Transverse colon (tissue), 4 donors: ENCODE measurements at regions of chr1 and their contacts with region 1.

Region 1: DNA sequence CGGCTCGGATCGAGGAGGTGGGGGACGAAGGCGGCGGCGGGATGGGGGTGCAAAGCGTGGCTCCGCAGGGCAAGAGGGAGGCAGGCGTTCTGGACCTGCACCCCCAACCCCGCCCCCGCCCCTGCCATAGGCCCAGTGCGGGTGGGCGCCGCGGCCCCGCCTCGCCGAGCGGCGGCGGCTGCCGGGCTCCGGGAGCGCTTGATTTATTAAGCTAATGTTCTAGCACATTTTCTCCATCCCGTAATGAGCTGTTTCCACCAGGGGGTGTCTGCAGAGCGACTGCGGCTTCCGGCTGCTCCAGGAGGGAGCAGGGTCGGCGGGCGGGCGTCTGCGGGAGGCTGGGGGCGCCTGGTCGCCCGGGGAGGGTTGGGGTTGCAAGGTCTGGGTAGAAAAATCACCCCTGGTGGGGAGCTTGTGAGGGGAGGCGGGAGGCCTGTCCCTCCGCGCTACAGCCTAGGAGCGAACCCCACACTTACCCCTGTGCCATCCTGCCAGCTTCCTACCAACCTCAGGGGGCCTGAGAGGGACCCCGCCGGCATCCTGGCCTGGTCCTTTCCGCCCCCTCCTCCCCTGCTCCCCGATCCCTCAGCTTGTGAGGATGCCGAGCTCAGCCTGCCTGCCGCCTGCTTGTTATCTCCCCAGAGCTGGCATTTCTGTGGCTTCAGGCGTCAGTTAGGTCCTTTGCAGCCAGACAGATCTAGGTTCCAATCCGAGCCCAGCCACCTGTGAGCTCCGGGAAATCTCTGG is 48.5 kb upstream of the ACOT11 start:
- DNase-seq: peak; percentile 43
- H3K4me3 ChIP-seq: peak overlapping the region; percentile 11 to 47 (median 36)
- H3K27ac ChIP-seq: peak overlapping the region in 1 of 4 donors; percentile 29
- H3K4me1 ChIP-seq: peaks cover 6 to 16% (median 12%) of the 10 kb centered on the region in 4 donors
- H3K27me3 ChIP-seq: peaks cover 5% of the 10 kb centered on the region
- CTCF ChIP-seq: peak; percentile 37 to 53 (median 52)
- EP300 ChIP-seq: no peak
- POLR2A ChIP-seq: no peak

Region 2: DNA sequence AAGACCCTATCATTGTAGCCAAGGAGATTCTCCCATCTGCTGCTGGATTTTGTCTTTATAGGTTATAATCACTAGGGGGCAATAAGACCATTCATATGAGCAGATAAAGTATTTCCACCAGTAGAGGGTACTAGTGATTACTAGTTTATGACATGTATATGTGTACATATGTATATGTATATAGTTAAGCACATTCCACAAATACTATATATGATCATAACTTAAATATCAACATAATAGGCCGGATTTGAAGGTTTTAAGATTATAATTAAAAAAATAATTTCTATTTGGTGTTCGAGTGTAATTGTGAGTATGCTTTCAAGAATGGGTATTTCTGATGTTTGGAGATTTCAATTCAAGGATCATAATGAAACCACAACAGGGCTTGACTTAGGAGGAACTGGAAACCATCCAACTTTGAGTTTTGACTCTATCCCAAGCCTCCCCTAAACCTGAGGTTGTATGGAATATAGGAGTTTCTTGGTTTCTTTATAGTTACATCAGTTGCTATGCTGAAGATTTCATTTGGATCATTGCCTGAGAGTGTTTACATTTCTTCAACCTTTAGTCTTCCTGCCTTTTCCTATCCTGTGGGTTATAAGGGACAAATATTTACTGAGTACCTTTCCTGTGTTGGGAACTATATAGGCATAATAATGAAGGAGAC is 429.2 kb before region 1 on chr1:
- in situ Hi-C with region 1: loop called in 2 of 4 experiments (anchors 10 kb)
- intact Hi-C with region 1: no loop called
- DNase-seq: no peak
- H3K4me3 ChIP-seq: no peak overlapping the region
- H3K27ac ChIP-seq: peak overlapping the region in 3 of 4 donors; percentile 7 to 26 (median 15)
- H3K4me1 ChIP-seq: peaks cover 0 to 9% (median 0%) of the 10 kb centered on the region in 4 donors
- H3K27me3 ChIP-seq: no peaks in the 10 kb centered on the region
- CTCF ChIP-seq: peak; percentile 62 to 84 (median 64)
- EP300 ChIP-seq: no peak
- POLR2A ChIP-seq: no peak

Region 3: DNA sequence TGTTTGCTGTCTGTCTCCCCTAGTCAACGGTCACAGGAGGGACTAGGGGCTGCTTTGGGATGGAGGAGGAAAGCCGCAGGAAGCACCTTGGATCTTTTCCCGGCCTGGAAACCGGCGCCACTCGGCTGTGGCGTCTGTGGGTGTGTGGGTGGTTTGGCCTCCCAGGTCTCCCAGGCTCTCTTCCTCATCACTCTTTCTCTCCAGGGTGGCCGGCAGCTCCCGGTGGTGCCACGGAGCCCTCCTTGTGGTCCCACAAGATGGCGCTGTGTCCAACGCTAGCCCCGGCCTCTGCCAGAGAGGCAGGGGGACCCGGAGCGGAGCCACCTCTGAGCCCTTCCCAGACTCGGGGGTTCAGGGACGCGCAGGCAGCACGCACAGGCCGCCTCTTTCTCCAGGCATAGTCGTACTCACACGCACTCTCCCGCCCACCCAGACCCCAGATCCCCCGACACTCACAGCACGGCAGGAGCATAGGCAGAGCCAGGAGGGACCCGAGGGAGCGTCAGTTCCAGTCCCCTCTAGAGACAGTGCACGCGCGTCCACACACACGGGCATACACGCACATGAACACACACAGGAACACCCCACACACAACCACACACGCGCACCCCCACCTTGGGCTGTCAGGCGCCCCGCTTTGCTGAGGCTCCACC is 377.9 kb before region 1 on chr1:
- in situ Hi-C with region 1: loop called in 3 of 4 experiments (anchors 5 to 25 kb)
- intact Hi-C with region 1: no loop called
- DNase-seq: peak; percentile 85
- H3K4me3 ChIP-seq: peak overlapping the region in 3 of 4 donors; percentile 10 to 34 (median 23)
- H3K27ac ChIP-seq: no peak overlapping the region
- H3K4me1 ChIP-seq: peaks cover 5 to 29% (median 13%) of the 10 kb centered on the region in 4 donors
- H3K27me3 ChIP-seq: no peaks in the 10 kb centered on the region
- CTCF ChIP-seq: peak; percentile 67 to 80 (median 76)
- EP300 ChIP-seq: no peak
- POLR2A ChIP-seq: no peak

Region 4: DNA sequence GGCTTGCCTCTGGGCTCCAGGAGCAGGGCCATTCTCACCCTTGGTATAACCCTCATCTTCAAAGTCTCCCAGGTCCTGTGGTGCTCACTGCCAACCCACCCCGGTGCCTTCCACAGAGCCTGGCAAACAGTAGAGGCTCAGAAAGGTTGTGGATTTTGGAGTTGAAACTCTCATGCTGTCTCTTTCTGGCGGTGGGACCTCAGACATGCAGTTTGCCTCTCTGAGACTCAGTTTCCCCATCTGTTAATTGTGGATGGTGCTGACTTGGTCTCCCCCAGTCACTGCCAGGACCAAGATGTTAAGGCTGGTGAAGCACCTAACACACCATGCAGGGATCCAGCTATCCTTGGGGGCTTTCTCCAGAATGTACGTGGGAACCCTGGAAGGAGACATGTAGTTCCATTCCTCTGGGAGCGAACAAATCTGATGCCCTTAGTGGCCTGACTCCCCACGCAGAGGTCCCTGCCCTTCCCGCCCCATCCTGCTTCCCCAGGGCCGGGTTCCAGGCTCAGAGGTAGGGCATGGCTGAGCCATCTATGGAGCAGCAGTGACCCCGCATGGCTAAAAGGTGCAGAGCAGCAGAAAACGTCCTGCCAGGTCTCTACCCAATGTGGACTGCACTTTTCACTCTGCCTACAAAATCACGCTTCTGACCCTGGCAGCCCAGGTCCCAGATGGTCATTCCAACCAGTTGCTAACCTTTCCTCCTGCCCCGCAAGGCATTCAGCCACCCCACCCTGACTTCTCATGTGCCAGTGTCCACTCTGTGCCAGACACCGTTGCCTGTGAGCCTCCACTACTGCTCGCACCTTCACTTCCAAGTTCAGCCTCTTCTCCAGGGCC is 310.8 kb after region 1 on chr1:
- in situ Hi-C with region 1: no loop called
- intact Hi-C with region 1: loop called (anchors 10 kb)
- DNase-seq: peak; percentile 81
- H3K4me3 ChIP-seq: no peak overlapping the region
- H3K27ac ChIP-seq: no peak overlapping the region
- H3K4me1 ChIP-seq: peaks cover 0 to 34% (median 14%) of the 10 kb centered on the region in 4 donors
- H3K27me3 ChIP-seq: no peaks in the 10 kb centered on the region
- CTCF ChIP-seq: peak; percentile 74 to 88 (median 80)
- EP300 ChIP-seq: no peak
- POLR2A ChIP-seq: no peak